BJ (cell line): ENCODE measurements at regions of chr3 and their contacts with region 1.

Region 1: GRCh38 chr3:103440539-103441203 is 1005.9 kb downstream of the ZPLD1 start:
- DNase-seq: no peak
- H3K4me3 ChIP-seq: no peak overlapping the region
- H3K27me3 ChIP-seq: no peaks in the 10 kb centered on the region
- CTCF ChIP-seq: 0 out of 2 replicates have a peak, but pooled peaks have one; percentile 14

Region 2: GRCh38 chr3:102866845-102867244 is 573.8 kb before region 1 on chr3:
- CTCF ChIA-PET with region 1: no interaction called
- POLR2A ChIA-PET with region 1: interaction called, 12 read pairs
- DNase-seq: no peak
- H3K4me3 ChIP-seq: no peak overlapping the region
- H3K27me3 ChIP-seq: no peaks in the 10 kb centered on the region
- CTCF ChIP-seq: no peak

Region 3: DNA sequence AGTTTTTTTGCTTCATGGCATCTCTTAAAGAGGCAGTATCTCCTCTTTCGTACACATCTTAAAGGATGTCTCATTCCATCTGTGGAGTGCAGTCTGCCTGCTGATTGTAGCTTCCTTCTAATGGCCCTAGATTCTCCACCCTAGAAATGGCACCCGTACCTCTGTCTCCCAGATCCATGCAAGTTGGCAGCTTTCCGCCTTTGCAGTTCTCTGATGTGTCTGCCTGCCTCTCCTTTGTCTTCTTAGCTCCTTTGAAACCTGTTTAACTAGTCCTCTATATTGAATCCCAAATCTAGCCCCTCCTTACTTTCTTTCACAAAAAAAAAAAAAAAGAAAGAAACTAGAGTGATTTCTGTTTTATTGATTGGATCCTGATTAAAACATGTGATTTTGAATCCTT is 19.1 kb after region 1 on chr3:
- CTCF ChIA-PET with region 1: no interaction called
- POLR2A ChIA-PET with region 1: no interaction called
- DNase-seq: no peak
- H3K4me3 ChIP-seq: no peak overlapping the region
- H3K27me3 ChIP-seq: no peaks in the 10 kb centered on the region
- CTCF ChIP-seq: no peak

Region 4: DNA sequence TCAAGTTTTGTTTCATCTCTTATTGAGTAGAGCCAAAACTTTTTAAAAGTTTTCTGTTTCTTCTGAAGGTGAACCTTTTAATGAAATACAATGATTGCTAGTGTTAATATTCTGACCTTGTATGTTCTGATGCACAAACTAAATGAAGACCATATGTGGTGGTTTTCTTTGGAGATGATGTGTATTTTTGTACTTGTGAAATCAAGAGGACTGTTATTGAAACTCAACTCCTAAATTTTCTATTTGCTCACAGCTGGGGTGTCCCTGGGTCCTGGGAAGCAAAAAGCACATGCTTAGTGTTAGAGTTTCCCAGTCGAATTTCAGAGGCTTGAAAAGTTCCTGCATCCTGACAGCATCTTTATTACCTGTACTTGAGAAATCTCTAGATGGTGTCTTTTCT is 740.2 kb after region 1 on chr3:
- CTCF ChIA-PET with region 1: no interaction called
- POLR2A ChIA-PET with region 1: no interaction called
- DNase-seq: no peak
- H3K4me3 ChIP-seq: no peak overlapping the region
- H3K27me3 ChIP-seq: no peaks in the 10 kb centered on the region
- CTCF ChIP-seq: no peak

Region 5: GRCh38 chr3:104596551-104596950 is 1155.9 kb after region 1 on chr3:
- CTCF ChIA-PET with region 1: no interaction called
- POLR2A ChIA-PET with region 1: no interaction called
- DNase-seq: no peak
- H3K4me3 ChIP-seq: no peak overlapping the region
- H3K27me3 ChIP-seq: no peaks in the 10 kb centered on the region
- CTCF ChIP-seq: peak; percentile 55